GM18951 (cell line): ENCODE measurements at regions of chr15 and their contacts with region 1.

Region 1: DNA sequence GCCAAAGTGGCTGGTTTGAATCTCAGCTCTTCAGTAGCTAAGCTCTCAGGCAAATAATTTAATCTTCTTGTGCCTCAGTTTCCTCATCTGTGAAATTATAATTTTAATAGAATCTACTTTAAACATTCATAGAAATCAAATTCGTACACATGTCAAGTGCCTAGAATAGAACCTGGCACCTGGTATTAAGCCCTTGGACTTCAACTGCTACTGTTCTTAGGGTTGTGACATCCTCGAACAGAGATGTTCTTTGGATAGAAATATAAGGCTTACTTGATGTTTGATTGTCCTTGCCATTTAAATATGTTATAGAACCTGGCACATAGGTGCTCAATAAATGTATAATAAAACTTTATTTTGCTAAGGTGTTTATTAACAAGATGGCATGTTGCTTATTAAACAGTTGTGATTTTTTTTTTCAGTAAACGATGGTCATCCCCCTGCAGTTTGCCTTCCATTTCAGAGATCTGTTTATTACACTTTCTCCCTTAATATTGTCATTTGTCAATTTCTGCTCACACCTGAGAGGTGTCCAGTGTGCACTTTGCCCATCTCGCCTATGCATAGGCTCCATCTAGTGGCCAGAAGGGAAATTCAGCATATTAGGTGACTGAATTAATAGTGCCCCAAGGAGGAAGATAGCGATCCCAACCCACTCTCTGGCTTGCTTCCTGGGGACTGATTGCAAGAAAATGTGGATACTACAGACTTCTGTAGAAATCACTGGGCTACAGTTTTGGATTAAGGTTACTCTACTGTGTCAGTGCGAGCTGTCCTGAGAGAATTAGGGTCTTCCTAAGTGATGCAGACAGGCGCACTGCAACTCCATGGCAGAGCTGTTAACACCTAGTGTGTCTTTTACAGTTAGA is 10.7 kb downstream of the IGF1R start:
- POLR2A ChIP-seq: no peak

Region 2: GRCh38 chr15:98442379-98442833 is 216.7 kb before region 1 on chr15:
- in situ Hi-C with region 1: loop called (anchors 10 kb)
- POLR2A ChIP-seq: no peak

Region 3: GRCh38 chr15:98525661-98526001 is 133.4 kb before region 1 on chr15:
- in situ Hi-C with region 1: loop called (anchors 10 kb)
- POLR2A ChIP-seq: no peak